ENCODE measurements at regions of chrX and their contacts with region 1.

Region 1: DNA sequence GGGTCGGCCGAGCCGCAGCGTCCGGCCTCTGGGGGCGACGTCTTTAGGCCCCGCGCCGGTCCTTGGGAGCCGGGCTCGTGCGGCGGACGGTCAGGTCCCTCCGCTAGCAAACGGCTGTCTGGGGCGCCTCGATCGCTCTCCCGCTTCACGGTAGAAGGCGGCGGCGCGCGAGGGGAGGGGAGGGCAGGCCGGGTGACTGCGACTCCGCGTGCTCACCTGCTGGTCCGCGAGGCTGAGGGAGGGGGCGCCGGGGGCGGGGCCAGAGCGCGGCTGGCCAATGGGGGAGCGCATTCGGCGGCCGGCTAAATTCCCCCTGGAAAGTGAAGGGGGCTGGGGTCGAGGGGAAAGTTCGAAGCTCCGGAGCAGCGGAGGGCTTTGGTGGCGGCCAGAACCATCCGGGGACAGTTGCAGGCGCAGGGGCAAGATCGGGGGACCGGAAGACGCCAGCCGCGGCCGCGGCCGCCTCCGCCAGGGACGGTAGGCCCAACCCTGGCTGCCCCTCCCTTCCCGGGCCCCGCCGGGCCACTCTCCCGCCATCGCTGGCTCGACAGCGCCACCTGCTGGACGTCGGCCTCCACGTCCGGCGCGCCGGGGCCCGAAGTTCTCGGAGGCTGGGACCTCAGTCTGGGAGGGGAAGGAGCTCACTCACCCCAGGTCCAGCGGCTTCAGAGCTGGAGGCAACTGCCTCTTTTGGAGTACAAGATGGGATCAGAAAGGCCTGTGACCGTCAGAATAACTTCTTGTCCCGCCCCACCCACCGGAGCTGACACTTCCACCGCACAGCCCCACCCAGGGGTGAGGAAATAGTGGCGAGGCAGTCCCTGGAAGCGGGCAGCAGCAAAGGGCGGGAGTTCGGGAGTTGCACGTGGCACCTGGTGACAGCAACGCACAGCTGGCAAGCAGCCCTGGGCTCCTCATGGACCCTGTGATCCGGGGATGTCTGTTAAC is 49.9 kb downstream of the ELF4 start:
- DNase-seq: no peak
- ATAC-seq: peak; percentile 98
- H3K4me3 ChIP-seq: peak overlapping the region; percentile 36; the same call in 1 of the 2 replicates
- H3K27ac ChIP-seq: no peak overlapping the region
- H3K4me1 ChIP-seq: peaks cover 3% of the 10 kb centered on the region; the same call in 1 of the 2 replicates
- H3K27me3 ChIP-seq: no peaks in the 10 kb centered on the region
- CTCF ChIP-seq: peak; percentile 66 to 90 (median 76)
- EP300 ChIP-seq: no peak
- POLR2A ChIP-seq: peak; percentile 66
- RAD21 ChIP-seq: peak; percentile 79

Region 2: GRCh38 chrX:129637217-129638109 is 422.9 kb before region 1 on chrX:
- CTCF ChIA-PET with region 1: interaction called, 11 read pairs
- POLR2A ChIA-PET with region 1: no interaction called
- RAD21 ChIA-PET with region 1: interaction called, 5 read pairs
- SMC1A ChIA-PET with region 1: no interaction called
- in situ Hi-C with region 1: no loop called
- intact Hi-C with region 1: loop called (anchors 1 kb)
- DNase-seq: peak; percentile 33
- ATAC-seq: peak; percentile 92
- H3K4me3 ChIP-seq: no peak overlapping the region
- H3K27ac ChIP-seq: no peak overlapping the region
- H3K4me1 ChIP-seq: no peaks in the 10 kb centered on the region
- H3K27me3 ChIP-seq: no peaks in the 10 kb centered on the region; a peak in 2 of 4 replicates
- CTCF ChIP-seq: peak; percentile 93 to 98 (median 97)
- EP300 ChIP-seq: no peak
- POLR2A ChIP-seq: no peak
- RAD21 ChIP-seq: peak; percentile 79

Region 3: GRCh38 chrX:129996120-129996519 is 64.3 kb before region 1 on chrX:
- CTCF ChIA-PET with region 1: no interaction called
- POLR2A ChIA-PET with region 1: no interaction called
- RAD21 ChIA-PET with region 1: no interaction called
- SMC1A ChIA-PET with region 1: no interaction called
- in situ Hi-C with region 1: no loop called
- intact Hi-C with region 1: no loop called
- DNase-seq: no peak
- ATAC-seq: no peak
- H3K4me3 ChIP-seq: no peak overlapping the region
- H3K27ac ChIP-seq: no peak overlapping the region
- H3K4me1 ChIP-seq: no peaks in the 10 kb centered on the region
- H3K27me3 ChIP-seq: no peaks in the 10 kb centered on the region
- CTCF ChIP-seq: no peak
- EP300 ChIP-seq: no peak
- POLR2A ChIP-seq: no peak
- RAD21 ChIP-seq: no peak

Region 4: DNA sequence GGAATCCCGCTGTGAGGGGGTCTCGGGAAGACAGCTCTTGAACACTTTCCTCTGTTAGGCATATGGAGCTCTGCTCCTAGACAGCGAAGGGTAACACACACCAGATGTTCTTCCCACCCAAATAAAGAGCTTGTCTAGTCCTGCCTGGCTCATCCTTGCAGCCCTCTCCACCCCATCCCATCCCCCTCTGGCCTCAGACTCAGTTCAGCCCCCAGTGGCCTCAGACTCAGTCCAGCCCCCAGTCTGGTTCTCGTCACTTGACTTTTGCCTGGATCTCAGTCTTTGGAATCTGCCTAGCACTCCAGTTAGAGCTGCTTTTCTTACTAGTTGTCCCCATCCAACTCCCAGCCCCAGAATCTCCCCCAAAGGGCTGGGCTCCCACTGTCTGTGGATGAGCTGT is 126.3 kb after region 1 on chrX:
- CTCF ChIA-PET with region 1: interaction called, 6 read pairs
- POLR2A ChIA-PET with region 1: no interaction called
- RAD21 ChIA-PET with region 1: interaction called, 10 read pairs
- SMC1A ChIA-PET with region 1: interaction called, 11 read pairs
- in situ Hi-C with region 1: no loop called
- intact Hi-C with region 1: no loop called
- DNase-seq: no peak
- ATAC-seq: no peak
- H3K4me3 ChIP-seq: no peak overlapping the region
- H3K27ac ChIP-seq: no peak overlapping the region
- H3K4me1 ChIP-seq: peaks cover 7% of the 10 kb centered on the region
- H3K27me3 ChIP-seq: no peaks in the 10 kb centered on the region
- CTCF ChIP-seq: no peak
- EP300 ChIP-seq: no peak
- POLR2A ChIP-seq: no peak
- RAD21 ChIP-seq: no peak

Measured in GM12878 (cell line).